ENCODE measurements at regions of chr3 and their contacts with region 1.

Region 1: DNA sequence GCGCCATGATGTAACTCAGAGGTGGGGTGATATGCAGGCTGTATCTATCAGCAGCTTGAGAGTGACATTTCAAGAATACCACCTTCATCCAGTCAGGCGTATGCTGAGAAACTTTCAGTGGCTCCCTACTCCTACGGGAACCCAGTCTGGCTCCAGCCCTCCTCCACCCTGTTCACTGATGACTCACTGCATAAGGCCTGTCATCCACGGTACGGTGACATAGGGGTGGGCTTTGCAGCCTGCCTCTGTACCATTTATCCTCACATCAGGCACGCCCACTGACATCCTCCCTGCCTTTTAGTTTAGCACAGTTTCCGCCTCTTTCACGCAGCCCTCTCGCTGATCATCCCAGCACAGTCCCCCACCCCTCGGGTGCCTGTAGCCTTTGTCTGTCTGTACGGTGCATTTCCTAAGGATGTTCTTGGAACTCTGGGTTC is 11.7 kb downstream of the PXYLP1 start:
- DNase-seq: no peak
- ATAC-seq: no peak
- H3K4me3 ChIP-seq: no peak overlapping the region
- H3K27ac ChIP-seq: peak overlapping the region in 1 of 4 donors; percentile 93
- H3K4me1 ChIP-seq: peaks cover 56 to 57% of the 10 kb centered on the region in 2 donors
- H3K27me3 ChIP-seq: no peaks in the 10 kb centered on the region
- CTCF ChIP-seq: no peak
- POLR2A ChIP-seq: no peak

Region 2: DNA sequence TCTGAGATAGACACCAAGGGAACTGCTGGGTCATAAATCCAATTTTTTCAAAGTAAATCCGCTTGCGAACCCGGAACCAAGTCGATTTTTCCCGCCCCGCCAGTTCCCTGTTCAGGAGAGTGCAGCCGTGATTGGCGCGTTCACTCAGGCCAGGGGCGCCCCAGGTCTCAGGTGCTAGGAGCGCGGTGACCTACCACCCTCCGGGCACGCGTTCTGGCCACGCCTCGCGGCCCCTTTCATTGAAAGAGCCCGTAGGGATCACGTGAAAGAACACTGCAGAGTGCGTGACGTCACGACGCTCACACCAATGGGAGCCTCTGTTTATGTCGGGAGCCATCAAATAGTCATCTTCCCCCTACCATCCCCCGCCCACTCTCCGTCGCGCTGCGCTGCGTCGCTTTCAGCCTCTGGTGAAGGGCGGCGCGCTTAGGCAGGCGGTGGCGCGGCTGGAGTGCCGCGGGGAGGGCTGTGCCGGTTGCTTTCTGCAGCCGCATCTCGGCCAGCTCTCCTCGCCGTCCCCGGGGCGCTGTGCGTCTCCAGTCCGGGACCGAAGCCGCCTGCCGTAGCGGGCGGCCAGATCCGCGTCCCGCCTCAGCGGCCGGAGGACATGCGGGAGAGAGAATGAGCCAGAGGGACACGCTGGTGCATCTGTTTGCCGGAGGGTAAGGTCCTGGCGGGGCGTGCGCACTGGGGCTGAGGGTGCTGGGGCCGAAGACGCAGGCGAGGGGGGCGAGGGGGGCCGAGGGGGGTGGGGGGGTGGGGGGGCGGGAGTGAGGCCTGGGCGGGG is 301.7 kb before region 1 on chr3 and contains the start of gene SLC25A36:
- in situ Hi-C with region 1: no loop called
- intact Hi-C with region 1: loop called (anchors 5 kb)
- DNase-seq: peak; percentile 96 to 97
- ATAC-seq: peak; percentile 99
- H3K4me3 ChIP-seq: peak within 1 kb of the TSS; percentile 66 to 97 (median 94)
- H3K27ac ChIP-seq: peak within 1 kb of the TSS; percentile 97 to 99 (median 99)
- H3K4me1 ChIP-seq: peaks cover 36 to 38% of the 10 kb centered on the region in 2 donors
- H3K27me3 ChIP-seq: no peaks in the 10 kb centered on the region
- CTCF ChIP-seq: peak in 1 of 5 experiments; percentile 30
- POLR2A ChIP-seq: peak; percentile 96 to 98
- total RNA-seq, gene SLC25A36: 17.3 to 74.7 (median 35.0) TPM